ENCODE measurements at regions of chr7 and their contacts with region 1.

Region 1: GRCh38 chr7:116138202-116138801 is 72.0 kb upstream of the TES start:
- DNase-seq: peak; percentile 37
- CTCF ChIP-seq: peak; percentile 69

Region 2: GRCh38 chr7:116097365-116098009 is 40.8 kb before region 1 on chr7:
- CTCF ChIA-PET with region 1: no interaction called
- POLR2A ChIA-PET with region 1: no interaction called
- DNase-seq: no peak
- CTCF ChIP-seq: no peak

Region 3: GRCh38 chr7:116122972-116123595 is 15.2 kb before region 1 on chr7:
- CTCF ChIA-PET with region 1: interaction called, 11 read pairs
- POLR2A ChIA-PET with region 1: no interaction called
- DNase-seq: peak; percentile 5
- CTCF ChIP-seq: peak; percentile 60

Region 4: DNA sequence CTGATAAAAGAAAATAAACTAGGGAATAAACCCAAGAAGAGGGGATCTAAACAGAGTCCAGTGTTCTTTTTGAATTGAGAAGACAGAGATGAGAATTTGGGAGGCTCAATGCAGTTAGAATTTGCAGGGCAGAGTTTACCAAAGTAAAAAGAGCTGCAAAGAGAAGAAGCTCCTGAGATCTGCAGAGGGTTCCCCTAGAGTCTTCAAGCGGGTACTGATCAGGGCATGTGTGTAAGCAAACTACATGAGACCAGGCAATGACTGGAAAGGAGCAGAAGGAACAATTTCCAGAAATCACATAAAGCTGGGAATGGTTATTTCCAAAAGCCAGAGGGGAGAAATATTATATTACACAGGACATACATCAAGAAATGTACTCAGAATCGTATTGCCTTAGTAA is 14.0 kb after region 1 on chr7:
- CTCF ChIA-PET with region 1: interaction called, 16 read pairs
- POLR2A ChIA-PET with region 1: no interaction called
- DNase-seq: no peak
- CTCF ChIP-seq: no peak

Region 5: DNA sequence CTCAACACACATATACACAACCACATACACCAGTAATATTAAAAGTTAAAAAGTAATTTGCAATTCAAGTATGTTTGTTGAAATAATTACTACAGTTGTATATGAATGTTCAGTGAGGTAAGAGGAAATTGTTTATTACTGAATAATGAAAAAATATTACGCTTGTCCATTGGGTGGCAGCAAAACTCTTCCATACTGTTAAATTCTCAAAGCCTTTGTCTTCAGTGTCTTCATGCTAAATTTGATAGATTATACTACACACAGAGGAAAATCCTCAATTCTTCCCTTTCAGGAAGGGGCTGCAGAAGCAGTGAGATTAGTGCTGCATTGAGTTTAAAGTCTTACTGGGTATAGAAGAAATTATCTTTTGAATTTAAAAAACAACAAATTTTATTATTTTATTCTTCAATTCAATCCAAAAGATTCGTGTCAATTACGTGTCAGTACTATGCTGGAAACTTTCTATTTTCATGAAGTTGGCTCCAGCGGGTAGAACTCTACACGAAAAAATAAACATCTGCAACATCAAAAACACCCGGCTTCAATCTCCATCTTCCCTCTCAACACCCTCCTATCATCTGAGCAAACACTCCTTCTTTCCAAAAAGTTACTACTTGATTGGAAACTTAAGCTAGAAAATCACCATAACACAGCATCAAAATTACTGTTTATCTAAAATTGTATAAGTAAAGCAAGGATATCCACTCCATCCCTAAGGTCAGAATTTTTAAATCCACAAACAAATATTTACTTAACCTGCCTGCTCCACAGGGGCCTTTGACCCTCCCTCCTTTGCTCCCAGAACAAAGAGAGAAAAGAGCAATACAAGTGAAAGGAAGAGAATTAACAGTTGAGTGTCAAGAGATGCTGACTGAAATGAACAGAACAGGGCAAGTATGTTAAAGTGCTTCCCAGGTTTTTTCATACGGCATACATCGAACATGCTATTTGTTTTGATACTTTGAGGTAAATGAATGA is 35.0 kb after region 1 on chr7:
- CTCF ChIA-PET with region 1: interaction called, 21 read pairs
- POLR2A ChIA-PET with region 1: no interaction called
- DNase-seq: peak; percentile 18
- CTCF ChIP-seq: peak; percentile 48

Measured in GM10248 (cell line).